Dendritic cell treated with granulocyte-macrophage colony-stimulating factor and Interleukin-4, amounts not matched to agents 40 ng/mL and 50 ng/mL, for 4 days (primary cell): ENCODE measurements at regions of chr7 and their contacts with region 1.

Region 1: GRCh38 chr7:36291387-36292316 is 98.0 kb upstream of the ANLN start:
- H3K4me3 Mint-ChIP-seq: peak overlapping the region; percentile 57
- H3K27ac Mint-ChIP-seq: peak overlapping the region; percentile 59
- H3K4me1 Mint-ChIP-seq: peaks cover 52% of the 10 kb centered on the region
- H3K27me3 Mint-ChIP-seq: peaks cover 1% of the 10 kb centered on the region

Region 2: GRCh38 chr7:36207451-36208291 is 84.0 kb before region 1 on chr7:
- intact Hi-C with region 1: loop called (anchors 5 kb)
- H3K4me3 Mint-ChIP-seq: no peak overlapping the region
- H3K27ac Mint-ChIP-seq: peak overlapping the region; percentile 90
- H3K4me1 Mint-ChIP-seq: peaks cover 81% of the 10 kb centered on the region
- H3K27me3 Mint-ChIP-seq: no peaks in the 10 kb centered on the region